Heart left ventricle (tissue), 16 donors: ENCODE measurements at regions of chr4 and their contacts with region 1.

Region 1: DNA sequence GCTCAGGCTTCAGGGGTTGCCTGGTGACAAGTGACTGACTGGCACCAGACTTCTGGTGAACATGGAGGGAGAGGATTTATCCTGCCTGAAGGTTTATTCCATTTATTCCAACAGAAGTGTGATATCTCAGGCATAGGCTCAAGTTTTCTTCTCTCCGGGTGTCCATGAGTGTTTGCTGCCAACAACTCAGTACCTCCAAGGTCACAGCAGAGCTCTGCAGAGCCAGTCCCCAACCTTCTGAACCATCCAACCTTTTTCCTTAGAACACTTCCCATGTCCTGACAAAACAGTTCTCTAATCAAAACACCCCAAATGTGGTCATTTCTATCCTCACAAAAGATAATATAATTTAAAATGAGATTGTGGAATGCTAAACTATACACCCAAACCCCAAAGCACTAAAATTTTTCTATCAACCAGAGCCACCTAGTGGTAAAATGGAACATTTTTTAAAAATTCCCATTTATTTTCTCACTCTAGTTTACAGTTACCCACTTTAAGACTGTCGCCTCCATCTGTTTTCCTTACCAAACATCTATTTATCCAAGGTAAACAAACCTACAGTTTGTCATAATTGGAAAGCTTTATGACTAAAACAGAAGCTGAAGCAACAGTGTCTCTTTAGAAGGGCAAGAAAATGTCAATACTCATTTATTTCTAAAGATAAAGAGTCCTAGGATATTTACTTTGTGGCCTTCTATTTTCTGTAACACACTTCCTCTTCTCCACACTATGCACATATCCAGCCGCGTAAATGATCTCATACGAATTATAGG is 39.6 kb downstream of the TMEM154 start:
- DNase-seq: no peak
- ATAC-seq: peak in 1 of 4 donors; percentile 69
- H3K4me3 ChIP-seq: no peak overlapping the region
- H3K27ac ChIP-seq: no peak overlapping the region
- H3K4me1 ChIP-seq: peaks cover 0 to 40% (median 8%) of the 10 kb centered on the region in 12 donors
- H3K27me3 ChIP-seq: no peaks in the 10 kb centered on the region
- CTCF ChIP-seq: peak; percentile 50 to 75 (median 63)
- POLR2A ChIP-seq: no peak

Region 2: GRCh38 chr4:152408514-152409327 is 231.5 kb before region 1 on chr4:
- intact Hi-C with region 1: loop called in 1 of 10 experiments (anchors 5 kb)
- DNase-seq: no peak
- ATAC-seq: no peak
- H3K4me3 ChIP-seq: no peak overlapping the region
- H3K27ac ChIP-seq: no peak overlapping the region
- H3K4me1 ChIP-seq: no peaks in the 10 kb centered on the region
- H3K27me3 ChIP-seq: no peaks in the 10 kb centered on the region
- CTCF ChIP-seq: peak; percentile 27 to 63 (median 48)
- POLR2A ChIP-seq: no peak

Region 3: DNA sequence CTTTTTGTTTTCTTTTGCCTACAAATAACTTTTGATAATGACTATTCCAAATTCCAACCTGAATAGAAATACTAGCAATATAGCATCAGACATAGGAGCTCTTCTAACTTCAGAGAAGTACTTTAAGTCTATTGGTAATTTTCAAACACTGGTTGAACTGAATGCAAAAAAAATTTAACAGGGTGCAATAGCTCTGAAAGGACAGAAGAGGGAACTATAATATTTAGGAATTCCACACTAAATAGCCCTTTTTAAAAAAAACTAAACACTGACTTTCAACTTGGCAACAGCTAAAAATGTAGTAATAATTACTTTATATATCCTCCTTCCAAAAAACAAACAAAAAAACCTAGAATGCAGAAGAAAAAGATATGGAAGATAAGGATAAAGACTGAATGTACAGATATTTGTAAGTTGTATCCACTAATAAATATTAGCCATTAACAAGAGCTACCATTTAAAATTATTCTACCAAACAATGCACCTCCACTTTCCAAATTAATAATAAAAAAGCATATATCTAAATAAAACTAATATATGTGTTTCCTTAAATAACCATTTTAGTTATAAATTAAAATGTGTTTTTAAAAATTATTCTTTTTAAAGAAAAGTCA is 185.7 kb before region 1 on chr4:
- intact Hi-C with region 1: loop called in 3 of 10 experiments (anchors 5 kb)
- DNase-seq: no peak
- ATAC-seq: no peak
- H3K4me3 ChIP-seq: no peak overlapping the region
- H3K27ac ChIP-seq: no peak overlapping the region
- H3K4me1 ChIP-seq: peaks cover 0 to 15% (median 0%) of the 10 kb centered on the region in 12 donors
- H3K27me3 ChIP-seq: no peaks in the 10 kb centered on the region
- CTCF ChIP-seq: peak; percentile 27 to 70 (median 54)
- POLR2A ChIP-seq: no peak

Region 4: DNA sequence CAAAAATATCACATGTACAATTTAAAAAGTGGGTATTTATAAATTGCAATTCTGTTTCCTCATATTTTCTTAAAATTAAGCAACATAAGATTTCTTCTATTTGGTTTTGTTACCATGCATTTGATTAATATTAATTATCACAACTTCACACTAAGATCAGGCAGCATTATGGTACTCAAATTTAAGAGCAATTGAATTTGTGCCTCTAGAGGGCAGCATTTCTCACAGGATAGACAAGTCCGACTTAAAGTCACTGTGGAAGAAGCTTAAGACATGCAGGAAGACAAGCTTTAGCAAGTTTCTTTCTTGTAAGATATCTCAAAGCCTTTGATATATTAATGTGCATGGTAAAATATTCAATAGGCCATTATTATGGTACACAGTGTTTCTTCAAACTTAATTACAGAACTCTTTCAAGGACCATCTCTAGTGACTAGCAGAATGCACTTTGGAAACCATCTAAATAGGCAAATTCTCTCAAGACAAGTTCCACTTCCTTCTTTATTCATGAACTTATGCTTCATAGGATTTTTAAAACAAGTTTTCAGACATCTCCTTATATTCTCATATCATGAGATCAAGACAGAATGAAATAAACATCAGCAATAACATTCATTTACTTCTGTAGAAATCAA is 139.3 kb before region 1 on chr4:
- intact Hi-C with region 1: loop called (anchors 2 to 5 kb)
- DNase-seq: peak in 2 of 5 donors; percentile 55 to 56
- ATAC-seq: peak in 3 of 4 donors; percentile 63 to 86 (median 72)
- H3K4me3 ChIP-seq: no peak overlapping the region
- H3K27ac ChIP-seq: no peak overlapping the region
- H3K4me1 ChIP-seq: peaks cover 0 to 7% (median 0%) of the 10 kb centered on the region in 12 donors
- H3K27me3 ChIP-seq: no peaks in the 10 kb centered on the region
- CTCF ChIP-seq: peak; percentile 66 to 92 (median 86)
- POLR2A ChIP-seq: no peak

Region 5: DNA sequence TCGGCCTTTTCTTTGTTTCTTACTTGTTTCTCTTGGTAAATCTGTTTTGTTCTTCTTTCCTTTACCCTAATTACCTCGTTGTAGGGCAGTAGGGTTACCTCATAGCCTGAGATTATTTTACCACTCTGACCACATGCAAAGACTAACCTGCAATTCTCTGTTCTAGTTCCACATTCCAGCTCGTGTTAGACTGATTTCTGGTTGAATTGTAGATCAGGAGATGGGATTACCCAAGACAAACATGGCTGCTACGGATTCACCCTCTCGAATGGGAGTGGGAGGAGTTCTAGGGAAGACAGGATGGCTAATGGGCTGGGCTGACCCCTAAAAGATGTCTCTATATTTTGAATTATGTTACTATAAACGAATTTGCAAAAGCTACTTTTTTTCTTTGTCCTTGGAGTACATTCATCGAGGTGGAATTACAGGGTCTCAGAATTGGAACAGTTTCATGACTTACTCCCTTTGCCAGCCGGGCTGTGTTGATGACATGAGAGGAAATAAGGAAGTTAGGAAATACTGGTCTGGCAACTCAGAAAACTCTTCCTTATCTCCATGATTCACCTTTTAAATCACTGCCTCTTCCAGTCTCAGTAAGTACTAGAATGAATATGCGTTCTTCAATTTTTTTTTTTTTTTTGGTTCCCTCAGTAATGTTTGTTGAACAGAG is 67.7 kb before region 1 on chr4:
- intact Hi-C with region 1: no loop called
- DNase-seq: no peak
- ATAC-seq: no peak
- H3K4me3 ChIP-seq: no peak overlapping the region
- H3K27ac ChIP-seq: no peak overlapping the region
- H3K4me1 ChIP-seq: no peaks in the 10 kb centered on the region
- H3K27me3 ChIP-seq: peaks cover 0 to 6% (median 0%) of the 10 kb centered on the region in 9 donors
- CTCF ChIP-seq: no peak
- POLR2A ChIP-seq: no peak